ENCODE measurements at regions of chr7 and their contacts with region 1.

Region 1: DNA sequence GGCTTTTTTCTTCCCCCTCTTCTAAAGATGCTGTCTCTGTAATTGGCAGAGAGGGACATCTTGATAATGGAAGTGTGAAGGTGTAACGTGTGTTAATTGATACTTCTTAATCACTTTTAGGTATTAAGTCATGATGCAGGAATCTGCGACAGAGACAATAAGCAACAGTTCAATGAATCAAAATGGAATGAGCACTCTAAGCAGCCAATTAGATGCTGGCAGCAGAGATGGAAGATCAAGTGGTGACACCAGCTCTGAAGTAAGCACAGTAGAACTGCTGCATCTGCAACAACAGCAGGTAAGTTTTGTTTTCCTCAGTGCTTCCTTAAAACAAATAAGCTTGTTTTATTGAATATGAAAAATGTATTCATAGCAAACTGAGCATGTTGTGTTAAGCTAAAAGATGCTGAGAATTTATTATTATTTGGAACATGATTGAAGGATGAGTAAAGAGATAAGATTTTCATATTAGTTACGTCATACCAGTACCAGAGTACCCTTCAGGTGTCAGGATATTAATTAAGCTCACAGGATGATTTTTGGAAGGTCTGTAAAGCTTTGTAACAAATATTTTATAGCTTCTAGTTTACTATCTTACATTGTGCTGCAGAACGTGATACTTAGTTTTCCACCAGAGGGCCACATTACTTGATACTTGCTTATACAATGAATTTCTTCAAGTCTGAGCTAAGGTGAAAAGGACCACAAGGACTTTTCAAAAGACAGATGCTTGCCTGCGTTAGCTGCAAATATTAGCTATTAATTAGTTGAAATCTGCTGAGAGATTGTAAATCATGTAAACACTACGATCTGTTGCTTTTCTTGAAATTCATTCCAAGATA is 12.0 kb downstream of the FOXP2 start:
- DNase-seq: no peak
- ATAC-seq: peak; percentile 72
- H3K4me3 Mint-ChIP-seq: no peak overlapping the region
- H3K27ac Mint-ChIP-seq: no peak overlapping the region
- H3K4me1 Mint-ChIP-seq: no peaks in the 10 kb centered on the region
- H3K27me3 Mint-ChIP-seq: no peaks in the 10 kb centered on the region
- CTCF ChIP-seq: no peak

Region 2: DNA sequence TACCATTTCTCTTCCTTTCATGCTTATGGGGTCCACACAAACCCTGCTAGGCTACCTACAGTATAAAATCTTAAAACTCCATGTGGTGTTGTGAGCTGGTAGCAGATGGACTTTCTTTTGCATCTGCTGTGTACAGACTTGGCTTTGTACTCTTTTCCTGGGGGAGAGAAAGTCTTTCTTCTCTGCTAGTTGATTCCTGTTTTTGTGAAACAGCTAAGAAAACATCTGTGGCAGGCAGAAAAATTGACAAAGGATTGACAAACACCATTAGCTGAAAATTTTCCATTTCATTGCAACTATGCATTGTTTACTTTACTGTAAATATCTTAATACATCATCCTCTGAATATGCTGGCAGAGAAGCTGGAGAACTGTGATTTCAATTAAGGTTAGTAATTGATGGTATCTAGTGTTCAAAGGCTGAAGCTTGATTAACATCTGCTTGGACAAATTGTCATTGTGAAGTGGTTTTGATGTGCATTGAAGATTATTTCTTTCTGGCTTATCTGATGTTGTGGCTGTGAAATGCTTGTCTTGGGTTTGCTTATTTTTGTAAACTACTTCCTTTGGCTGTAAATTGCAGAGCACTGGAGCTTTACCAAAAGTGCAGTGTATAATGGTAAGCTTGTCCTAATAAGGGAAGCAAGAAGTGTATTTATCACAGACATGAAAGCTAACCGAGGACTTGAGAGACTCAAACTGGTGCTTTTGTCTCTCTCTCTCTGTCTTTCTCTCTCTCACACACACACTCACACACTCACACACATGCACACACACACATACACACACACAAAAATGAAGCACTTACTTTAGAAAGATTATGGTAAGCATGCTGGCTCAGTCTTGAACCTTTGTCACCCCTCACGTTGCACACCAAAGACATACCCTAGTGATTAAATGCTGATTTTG is 12.2 kb before region 1 on chr7 and contains the start of gene FOXP2:
- CTCF ChIA-PET with region 1: interaction called, 10 read pairs
- POLR2A ChIA-PET with region 1: no interaction called
- DNase-seq: no peak
- ATAC-seq: peak; percentile 20; the same call in 1 of the 2 replicates
- H3K4me3 Mint-ChIP-seq: no peak within 1 kb of the TSS
- H3K27ac Mint-ChIP-seq: no peak within 1 kb of the TSS
- H3K4me1 Mint-ChIP-seq: peaks cover 7% of the 10 kb centered on the region
- H3K27me3 Mint-ChIP-seq: no peaks in the 10 kb centered on the region
- CTCF ChIP-seq: no peak
- total RNA-seq, gene FOXP2: 0.14 to 0.39 TPM (median 0.17 TPM) in 3 replicates

Region 3: DNA sequence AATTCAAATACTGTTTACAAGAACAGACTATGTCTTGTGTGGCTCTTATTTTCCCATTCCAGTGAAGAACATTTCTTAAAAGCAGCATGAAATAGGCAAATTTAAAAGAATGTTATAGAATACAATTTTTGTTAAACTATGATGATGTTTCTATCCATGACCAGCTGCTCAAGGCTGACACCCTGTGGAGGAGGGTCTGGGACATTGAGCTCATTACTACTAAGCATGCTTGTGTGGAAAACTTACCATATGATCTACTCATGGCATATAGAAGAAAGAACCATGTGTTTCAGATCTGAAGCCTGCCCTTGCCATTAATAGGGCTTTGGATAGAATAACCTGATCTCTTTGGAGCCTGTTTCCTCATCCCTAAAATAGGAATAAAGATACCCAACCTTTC is 113.0 kb after region 1 on chr7:
- CTCF ChIA-PET with region 1: interaction called, 21 read pairs
- POLR2A ChIA-PET with region 1: no interaction called
- DNase-seq: no peak
- ATAC-seq: peak; percentile 58; the same call in 1 of the 2 replicates
- H3K4me3 Mint-ChIP-seq: no peak overlapping the region
- H3K27ac Mint-ChIP-seq: no peak overlapping the region
- H3K4me1 Mint-ChIP-seq: peaks cover 10% of the 10 kb centered on the region
- H3K27me3 Mint-ChIP-seq: no peaks in the 10 kb centered on the region
- CTCF ChIP-seq: no peak

Region 4: GRCh38 chr7:114663502-114663901 is 236.9 kb after region 1 on chr7:
- CTCF ChIA-PET with region 1: interaction called, 48 read pairs
- POLR2A ChIA-PET with region 1: interaction called, 4 read pairs
- DNase-seq: no peak
- ATAC-seq: peak; percentile 71
- H3K4me3 Mint-ChIP-seq: no peak overlapping the region
- H3K27ac Mint-ChIP-seq: no peak overlapping the region
- H3K4me1 Mint-ChIP-seq: peaks cover 38% of the 10 kb centered on the region
- H3K27me3 Mint-ChIP-seq: no peaks in the 10 kb centered on the region
- CTCF ChIP-seq: 0 out of 2 replicates have a peak, but pooled peaks have one; percentile 16

Measured in WTC11 (cell line).